CD8-positive, alpha-beta T cell (primary cell): ENCODE measurements at regions of chr1 and their contacts with region 1.

Region 1: GRCh38 chr1:44213222-44214112 is at the start of gene DMAP1:
- DNase-seq: peak; percentile 75 to 95 (median 86)
- ATAC-seq: peak; percentile 83
- H3K4me3 ChIP-seq: peak within 1 kb of the TSS; percentile 91
- H3K4me3 Mint-ChIP-seq: peak within 1 kb of the TSS; percentile 95
- H3K27ac ChIP-seq: peak within 1 kb of the TSS; percentile 61 to 74
- H3K27ac Mint-ChIP-seq: peak within 1 kb of the TSS; percentile 83
- H3K4me1 ChIP-seq: peaks cover 18% of the 10 kb centered on the region
- H3K4me1 Mint-ChIP-seq: peaks cover 42% of the 10 kb centered on the region
- H3K27me3 ChIP-seq: no peaks in the 10 kb centered on the region
- H3K27me3 Mint-ChIP-seq: no peaks in the 10 kb centered on the region
- CTCF ChIP-seq: no peak
- total RNA-seq, gene DMAP1: 59.0 to 59.5 TPM

Region 2: DNA sequence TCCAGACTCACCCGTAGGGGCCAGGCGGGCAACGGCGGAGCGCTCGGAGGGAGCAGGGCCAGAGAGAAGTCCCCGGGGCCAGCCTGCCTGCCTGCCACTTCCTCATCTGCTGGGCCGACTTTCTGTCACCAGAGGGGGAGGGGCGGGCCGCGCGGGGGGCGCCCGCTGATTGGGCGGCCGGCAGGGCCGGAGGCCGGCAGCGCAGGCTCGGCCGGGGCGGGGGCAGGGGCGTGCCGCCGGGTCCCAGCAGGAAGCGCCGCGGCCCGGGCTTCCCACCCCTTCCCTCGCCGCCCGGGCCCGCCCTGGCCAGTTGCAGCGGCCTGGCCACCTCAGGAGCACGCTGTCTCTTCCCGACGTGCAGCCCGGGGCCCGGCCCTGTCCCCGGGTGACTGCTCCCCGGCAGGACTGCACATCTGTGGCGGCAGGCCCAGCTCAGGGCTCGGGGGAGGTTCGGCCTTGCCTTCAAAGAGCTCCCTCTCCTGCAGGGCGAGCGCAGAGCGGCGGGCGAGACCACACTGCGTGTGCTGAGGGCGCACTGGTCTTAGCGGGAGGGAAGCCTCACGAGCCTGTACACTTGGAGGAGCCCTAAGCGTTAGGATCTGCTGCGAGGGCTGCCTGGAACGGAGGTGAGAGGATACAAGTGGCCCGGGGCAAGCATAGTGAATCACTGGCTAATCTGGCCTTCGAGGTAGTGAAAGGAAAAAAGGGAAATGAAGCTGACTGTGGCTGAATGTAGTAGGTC is 845.4 kb before region 1 on chr1 and contains the start of gene ELOVL1:
- CTCF ChIA-PET with region 1: no interaction called
- POLR2A ChIA-PET with region 1: no interaction called
- intact Hi-C with region 1: loop called in 1 of 2 experiments (anchors 5 kb)
- DNase-seq: peak; percentile 40 to 93 (median 85)
- ATAC-seq: peak; percentile 68
- H3K4me3 ChIP-seq: peak within 1 kb of the TSS; percentile 65 to 74
- H3K4me3 Mint-ChIP-seq: peak within 1 kb of the TSS; percentile 88
- H3K27ac ChIP-seq: peak within 1 kb of the TSS; percentile 63 to 78
- H3K27ac Mint-ChIP-seq: peak within 1 kb of the TSS; percentile 93
- H3K4me1 ChIP-seq: peaks cover 17% of the 10 kb centered on the region
- H3K4me1 Mint-ChIP-seq: peaks cover 42% of the 10 kb centered on the region
- H3K27me3 ChIP-seq: no peaks in the 10 kb centered on the region
- H3K27me3 Mint-ChIP-seq: no peaks in the 10 kb centered on the region
- CTCF ChIP-seq: no peak
- total RNA-seq, gene ELOVL1: 24.6 to 25.6 TPM

Region 3: GRCh38 chr1:44227211-44227610 is 13.7 kb after region 1 on chr1:
- CTCF ChIA-PET with region 1: interaction called, 33 read pairs
- POLR2A ChIA-PET with region 1: interaction called, 3 read pairs
- intact Hi-C with region 1: no loop called
- DNase-seq: no peak
- ATAC-seq: no peak
- H3K4me3 ChIP-seq: no peak overlapping the region
- H3K4me3 Mint-ChIP-seq: no peak overlapping the region
- H3K27ac ChIP-seq: no peak overlapping the region
- H3K27ac Mint-ChIP-seq: peak overlapping the region; percentile 60
- H3K4me1 ChIP-seq: peaks cover 12% of the 10 kb centered on the region
- H3K4me1 Mint-ChIP-seq: peaks cover 17% of the 10 kb centered on the region
- H3K27me3 ChIP-seq: no peaks in the 10 kb centered on the region
- H3K27me3 Mint-ChIP-seq: no peaks in the 10 kb centered on the region
- CTCF ChIP-seq: no peak

Region 4: DNA sequence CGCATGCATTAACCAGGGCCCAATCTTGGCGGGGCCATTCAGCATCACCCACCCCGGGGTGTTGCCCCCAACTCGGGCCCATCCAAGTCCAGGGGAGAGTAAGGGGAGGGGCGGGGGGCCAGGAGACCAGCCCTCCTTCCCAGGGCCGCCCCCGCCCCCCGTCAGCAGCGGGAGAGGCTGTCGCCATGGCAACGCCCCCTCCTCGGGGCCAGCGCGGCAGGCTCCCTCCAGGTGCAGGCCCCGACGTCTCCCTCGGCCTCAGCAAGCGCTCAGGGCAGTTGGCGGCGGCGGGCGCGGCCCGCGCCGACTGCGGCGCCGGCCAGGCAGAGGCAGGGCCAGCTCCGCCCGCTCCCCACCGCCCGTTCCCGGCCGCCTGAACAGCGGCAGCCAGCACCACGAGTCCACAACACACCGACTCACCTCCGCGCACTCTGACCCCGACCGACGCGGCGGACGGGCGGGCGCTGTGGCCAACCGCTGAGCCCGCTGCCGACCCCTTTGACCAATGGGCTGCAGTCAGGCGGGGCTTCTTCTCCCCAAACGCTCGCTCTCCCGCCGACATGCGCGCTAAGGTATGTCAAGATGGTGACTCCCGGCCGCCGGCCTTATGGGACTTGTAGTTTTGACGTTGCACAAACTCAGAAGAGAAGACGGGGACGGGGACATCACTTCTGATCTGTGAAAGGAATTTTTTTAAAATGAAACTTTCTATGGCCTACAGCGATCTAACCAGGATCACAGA is 141.5 kb after region 1 on chr1 and contains the start of gene ERI3:
- CTCF ChIA-PET with region 1: no interaction called
- POLR2A ChIA-PET with region 1: interaction called, 3 read pairs
- intact Hi-C with region 1: loop called in 1 of 2 experiments (anchors 1 kb)
- DNase-seq: peak; percentile 91 to 98 (median 96)
- ATAC-seq: peak; percentile 99
- H3K4me3 ChIP-seq: peak within 1 kb of the TSS; percentile 56 to 64
- H3K4me3 Mint-ChIP-seq: peak within 1 kb of the TSS; percentile 95
- H3K27ac ChIP-seq: peak within 1 kb of the TSS; percentile 37 to 60
- H3K27ac Mint-ChIP-seq: peak within 1 kb of the TSS; percentile 93
- H3K4me1 ChIP-seq: peaks cover 20% of the 10 kb centered on the region
- H3K4me1 Mint-ChIP-seq: peaks cover 38% of the 10 kb centered on the region
- H3K27me3 ChIP-seq: no peaks in the 10 kb centered on the region
- H3K27me3 Mint-ChIP-seq: no peaks in the 10 kb centered on the region
- CTCF ChIP-seq: no peak
- total RNA-seq, gene ERI3: 17.3 to 20.0 TPM

Region 5: GRCh38 chr1:44652445-44653106 is 439.1 kb after region 1 on chr1:
- CTCF ChIA-PET with region 1: interaction called, 10 read pairs
- POLR2A ChIA-PET with region 1: no interaction called
- intact Hi-C with region 1: loop called (anchors 1 to 2 kb)
- DNase-seq: peak; percentile 57 to 85 (median 78)
- ATAC-seq: peak; percentile 99
- H3K4me3 ChIP-seq: no peak overlapping the region
- H3K4me3 Mint-ChIP-seq: no peak overlapping the region
- H3K27ac ChIP-seq: no peak overlapping the region
- H3K27ac Mint-ChIP-seq: peak overlapping the region; percentile 57
- H3K4me1 ChIP-seq: no peaks in the 10 kb centered on the region
- H3K4me1 Mint-ChIP-seq: no peaks in the 10 kb centered on the region
- H3K27me3 ChIP-seq: no peaks in the 10 kb centered on the region
- H3K27me3 Mint-ChIP-seq: no peaks in the 10 kb centered on the region
- CTCF ChIP-seq: peak; percentile 85